B cell (primary cell): ENCODE measurements at regions of chr2 and their contacts with region 1.

Region 1: GRCh38 chr2:69816923-69817542 is 12.4 kb upstream of the GMCL1 start:
- DNase-seq: peak; percentile 87
- ATAC-seq: peak; percentile 88
- H3K4me3 ChIP-seq: no peak overlapping the region
- H3K4me3 Mint-ChIP-seq: no peak overlapping the region
- H3K27ac ChIP-seq: no peak overlapping the region
- H3K27ac Mint-ChIP-seq: no peak overlapping the region
- H3K4me1 ChIP-seq: peaks cover 0 to 6% of the 10 kb centered on the region in 2 donors
- H3K4me1 Mint-ChIP-seq: peaks cover 3% of the 10 kb centered on the region
- H3K27me3 ChIP-seq: no peaks in the 10 kb centered on the region
- H3K27me3 Mint-ChIP-seq: no peaks in the 10 kb centered on the region
- CTCF ChIP-seq: peak; percentile 92

Region 2: DNA sequence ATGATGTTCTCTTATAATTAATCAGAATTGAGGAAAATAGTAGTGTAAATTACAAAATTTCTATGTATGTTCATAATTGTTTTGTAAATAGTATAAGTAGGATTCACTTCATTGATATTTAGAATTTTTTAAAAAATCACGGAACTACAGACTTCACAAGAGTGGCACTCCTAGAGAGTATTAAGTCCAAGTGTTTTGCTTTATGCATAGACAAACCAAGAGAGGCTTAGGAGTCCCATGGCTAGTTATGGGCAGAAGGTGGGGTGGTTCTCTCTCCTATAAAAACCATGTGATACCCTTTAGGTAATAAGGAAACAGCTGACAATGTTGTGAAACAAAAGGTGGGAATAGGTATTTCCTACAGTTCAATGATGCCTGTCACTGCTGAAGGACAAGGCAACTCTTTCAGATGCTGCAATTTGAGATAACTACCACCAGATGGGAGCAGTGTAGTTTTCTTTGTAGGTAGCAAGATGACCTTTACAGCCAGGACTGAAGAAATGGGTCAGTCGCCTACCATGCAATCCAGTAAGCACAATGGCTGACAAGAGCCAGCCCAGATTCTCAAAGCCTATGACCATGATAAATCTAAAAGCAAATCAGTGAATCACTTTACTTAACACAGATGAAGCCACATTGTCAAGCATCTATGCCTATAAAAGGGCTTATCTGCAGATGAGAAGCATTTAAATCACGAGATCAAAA is 257.4 kb before region 1 on chr2:
- CTCF ChIA-PET with region 1: interaction called, 8 read pairs
- POLR2A ChIA-PET with region 1: no interaction called
- intact Hi-C with region 1: loop called (anchors 1 kb)
- DNase-seq: peak; percentile 51
- ATAC-seq: peak; percentile 62
- H3K4me3 ChIP-seq: no peak overlapping the region
- H3K4me3 Mint-ChIP-seq: no peak overlapping the region
- H3K27ac ChIP-seq: no peak overlapping the region
- H3K27ac Mint-ChIP-seq: no peak overlapping the region
- H3K4me1 ChIP-seq: peaks cover 0 to 4% of the 10 kb centered on the region in 2 donors
- H3K4me1 Mint-ChIP-seq: peaks cover 4% of the 10 kb centered on the region
- H3K27me3 ChIP-seq: peaks cover 0 to 5% (median 0%) of the 10 kb centered on the region in 4 experiments
- H3K27me3 Mint-ChIP-seq: peaks cover 21% of the 10 kb centered on the region
- CTCF ChIP-seq: peak; percentile 55

Region 3: DNA sequence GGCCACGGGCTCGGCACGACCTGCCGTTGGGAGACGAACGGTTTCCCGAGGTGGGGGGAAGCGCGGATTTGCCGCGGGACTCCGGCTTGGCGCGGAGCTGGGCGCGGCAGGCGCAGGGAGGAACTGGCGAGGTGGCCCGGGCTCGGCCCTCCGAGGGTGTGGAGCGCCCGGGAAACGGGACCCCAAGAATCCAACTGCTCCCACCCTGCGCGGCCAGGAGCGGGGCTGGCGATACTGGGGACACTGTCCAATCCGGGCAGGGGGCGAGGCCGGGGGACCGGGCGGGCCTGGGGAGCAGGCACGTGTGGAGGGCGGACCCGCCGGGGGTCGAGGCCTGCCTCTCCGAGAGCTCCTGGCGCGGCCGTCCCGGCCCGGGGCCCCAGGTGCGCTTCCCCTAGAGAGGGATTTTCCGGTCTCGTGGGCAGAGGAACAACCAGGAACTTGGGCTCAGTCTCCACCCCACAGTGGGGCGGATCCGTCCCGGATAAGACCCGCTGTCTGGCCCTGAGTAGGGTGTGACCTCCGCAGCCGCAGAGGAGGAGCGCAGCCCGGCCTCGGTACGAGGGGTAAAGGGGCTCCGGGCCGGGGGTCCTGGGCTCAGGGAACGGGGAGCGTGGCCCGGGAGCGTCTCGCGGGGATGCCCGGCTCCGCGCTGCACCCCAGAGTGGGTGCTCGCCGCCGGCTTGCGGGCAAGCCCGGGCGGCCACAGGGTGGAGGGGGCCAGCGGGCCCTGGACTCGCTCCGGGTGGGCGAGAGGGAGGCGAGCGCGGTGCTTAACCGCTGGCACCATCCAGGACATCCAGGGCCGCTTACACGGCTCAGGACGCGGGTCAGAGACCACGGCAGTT is 75.2 kb before region 1 on chr2 and contains the start of gene ANXA4:
- CTCF ChIA-PET with region 1: interaction called, 22 read pairs
- POLR2A ChIA-PET with region 1: no interaction called
- intact Hi-C with region 1: loop called (anchors 1 kb)
- DNase-seq: peak; percentile 68
- ATAC-seq: peak; percentile 82
- H3K4me3 ChIP-seq: peak within 1 kb of the TSS; percentile 74 to 89 (median 75)
- H3K4me3 Mint-ChIP-seq: peak within 1 kb of the TSS; percentile 99
- H3K27ac ChIP-seq: peak within 1 kb of the TSS; percentile 14 to 79
- H3K27ac Mint-ChIP-seq: peak within 1 kb of the TSS; percentile 95
- H3K4me1 ChIP-seq: peaks cover 26 to 41% of the 10 kb centered on the region in 2 donors
- H3K4me1 Mint-ChIP-seq: peaks cover 30% of the 10 kb centered on the region
- H3K27me3 ChIP-seq: no peaks in the 10 kb centered on the region
- H3K27me3 Mint-ChIP-seq: no peaks in the 10 kb centered on the region
- CTCF ChIP-seq: no peak
- total RNA-seq, gene ANXA4: 28.1 and 28.4 TPM in 2 replicates

Region 4: DNA sequence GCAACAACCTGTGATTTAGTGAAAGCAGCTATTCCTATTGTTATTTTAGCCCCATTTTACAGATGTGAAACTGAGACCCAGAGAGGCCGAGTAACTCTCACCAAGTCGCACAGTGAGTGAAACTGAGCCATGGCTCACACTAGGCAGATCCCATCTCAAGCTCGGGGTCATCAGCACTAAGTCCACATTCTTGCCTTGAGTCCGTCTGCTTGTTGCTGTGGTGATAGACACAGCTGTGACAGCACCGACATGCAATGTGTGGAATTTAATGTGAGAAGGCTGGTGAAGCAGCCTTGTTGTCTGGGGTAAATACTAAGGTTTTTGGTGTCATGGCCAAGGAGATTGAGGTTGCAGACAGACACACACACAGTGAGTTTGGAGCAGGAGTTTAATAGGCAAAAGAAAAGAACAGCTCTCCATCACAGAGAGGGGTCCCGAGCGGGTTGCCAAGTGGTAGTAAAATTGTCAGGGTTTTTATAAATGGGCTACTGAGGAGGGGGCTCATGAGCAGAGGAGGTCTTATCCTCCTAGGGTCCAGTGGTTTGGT is 27.8 kb before region 1 on chr2:
- CTCF ChIA-PET with region 1: interaction called, 23 read pairs
- POLR2A ChIA-PET with region 1: no interaction called
- intact Hi-C with region 1: no loop called
- DNase-seq: no peak
- ATAC-seq: no peak
- H3K4me3 ChIP-seq: peak overlapping the region in 1 of 5 experiments; percentile 50
- H3K4me3 Mint-ChIP-seq: peak overlapping the region; percentile 84
- H3K27ac ChIP-seq: peak overlapping the region; percentile 43 to 85
- H3K27ac Mint-ChIP-seq: peak overlapping the region; percentile 64
- H3K4me1 ChIP-seq: peaks cover 33 to 44% of the 10 kb centered on the region in 2 donors
- H3K4me1 Mint-ChIP-seq: peaks cover 37% of the 10 kb centered on the region
- H3K27me3 ChIP-seq: no peaks in the 10 kb centered on the region
- H3K27me3 Mint-ChIP-seq: no peaks in the 10 kb centered on the region
- CTCF ChIP-seq: no peak

Region 5: GRCh38 chr2:69804416-69804815 is 12.6 kb before region 1 on chr2:
- CTCF ChIA-PET with region 1: interaction called, 31 read pairs
- POLR2A ChIA-PET with region 1: no interaction called
- intact Hi-C with region 1: loop called (anchors 2 kb)
- DNase-seq: no peak
- ATAC-seq: no peak
- H3K4me3 ChIP-seq: no peak overlapping the region
- H3K4me3 Mint-ChIP-seq: peak overlapping the region; percentile 30
- H3K27ac ChIP-seq: no peak overlapping the region
- H3K27ac Mint-ChIP-seq: peak overlapping the region; percentile 17
- H3K4me1 ChIP-seq: peaks cover 44 to 53% of the 10 kb centered on the region in 2 donors
- H3K4me1 Mint-ChIP-seq: peaks cover 44% of the 10 kb centered on the region
- H3K27me3 ChIP-seq: no peaks in the 10 kb centered on the region
- H3K27me3 Mint-ChIP-seq: no peaks in the 10 kb centered on the region
- CTCF ChIP-seq: no peak

Region 6: DNA sequence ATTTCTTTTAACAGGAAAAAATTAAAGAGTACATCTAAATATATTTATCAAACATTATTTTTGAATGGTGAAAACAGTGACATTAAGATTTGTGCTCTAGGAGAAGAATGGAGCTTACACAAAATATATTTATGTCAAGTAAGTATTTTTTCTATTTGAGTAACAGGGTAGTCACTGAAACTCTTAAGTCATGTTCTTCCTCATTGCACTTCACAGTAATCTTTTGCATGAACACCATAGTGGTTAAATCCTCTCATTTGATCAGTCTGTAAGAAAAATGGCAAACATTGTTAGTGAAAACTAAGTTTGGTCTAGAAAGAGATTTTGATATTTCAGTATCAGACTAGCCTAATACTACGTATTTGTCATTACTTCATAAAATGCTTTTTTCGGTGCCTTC is 20.5 kb after region 1 on chr2:
- CTCF ChIA-PET with region 1: no interaction called
- POLR2A ChIA-PET with region 1: no interaction called
- intact Hi-C with region 1: no loop called
- DNase-seq: no peak
- ATAC-seq: no peak
- H3K4me3 ChIP-seq: no peak overlapping the region
- H3K4me3 Mint-ChIP-seq: no peak overlapping the region
- H3K27ac ChIP-seq: no peak overlapping the region
- H3K27ac Mint-ChIP-seq: no peak overlapping the region
- H3K4me1 ChIP-seq: no peaks in the 10 kb centered on the region
- H3K4me1 Mint-ChIP-seq: peaks cover 29% of the 10 kb centered on the region
- H3K27me3 ChIP-seq: no peaks in the 10 kb centered on the region
- H3K27me3 Mint-ChIP-seq: no peaks in the 10 kb centered on the region
- CTCF ChIP-seq: no peak

Region 7: GRCh38 chr2:69973335-69973735 is 156.3 kb after region 1 on chr2:
- CTCF ChIA-PET with region 1: no interaction called
- POLR2A ChIA-PET with region 1: no interaction called
- intact Hi-C with region 1: no loop called
- DNase-seq: no peak
- ATAC-seq: no peak
- H3K4me3 ChIP-seq: no peak overlapping the region
- H3K4me3 Mint-ChIP-seq: no peak overlapping the region
- H3K27ac ChIP-seq: no peak overlapping the region
- H3K27ac Mint-ChIP-seq: no peak overlapping the region
- H3K4me1 ChIP-seq: no peaks in the 10 kb centered on the region
- H3K4me1 Mint-ChIP-seq: no peaks in the 10 kb centered on the region
- H3K27me3 ChIP-seq: no peaks in the 10 kb centered on the region
- H3K27me3 Mint-ChIP-seq: no peaks in the 10 kb centered on the region
- CTCF ChIP-seq: no peak

Region 8: GRCh38 chr2:70062268-70062667 is 245.2 kb after region 1 on chr2:
- CTCF ChIA-PET with region 1: no interaction called
- POLR2A ChIA-PET with region 1: no interaction called
- intact Hi-C with region 1: no loop called
- DNase-seq: no peak
- ATAC-seq: no peak
- H3K4me3 ChIP-seq: no peak overlapping the region
- H3K4me3 Mint-ChIP-seq: no peak overlapping the region
- H3K27ac ChIP-seq: no peak overlapping the region
- H3K27ac Mint-ChIP-seq: no peak overlapping the region
- H3K4me1 ChIP-seq: no peaks in the 10 kb centered on the region
- H3K4me1 Mint-ChIP-seq: peaks cover 3% of the 10 kb centered on the region
- H3K27me3 ChIP-seq: no peaks in the 10 kb centered on the region
- H3K27me3 Mint-ChIP-seq: no peaks in the 10 kb centered on the region
- CTCF ChIP-seq: no peak